ENCODE measurements at regions of chr19 and their contacts with region 1.

Region 1: DNA sequence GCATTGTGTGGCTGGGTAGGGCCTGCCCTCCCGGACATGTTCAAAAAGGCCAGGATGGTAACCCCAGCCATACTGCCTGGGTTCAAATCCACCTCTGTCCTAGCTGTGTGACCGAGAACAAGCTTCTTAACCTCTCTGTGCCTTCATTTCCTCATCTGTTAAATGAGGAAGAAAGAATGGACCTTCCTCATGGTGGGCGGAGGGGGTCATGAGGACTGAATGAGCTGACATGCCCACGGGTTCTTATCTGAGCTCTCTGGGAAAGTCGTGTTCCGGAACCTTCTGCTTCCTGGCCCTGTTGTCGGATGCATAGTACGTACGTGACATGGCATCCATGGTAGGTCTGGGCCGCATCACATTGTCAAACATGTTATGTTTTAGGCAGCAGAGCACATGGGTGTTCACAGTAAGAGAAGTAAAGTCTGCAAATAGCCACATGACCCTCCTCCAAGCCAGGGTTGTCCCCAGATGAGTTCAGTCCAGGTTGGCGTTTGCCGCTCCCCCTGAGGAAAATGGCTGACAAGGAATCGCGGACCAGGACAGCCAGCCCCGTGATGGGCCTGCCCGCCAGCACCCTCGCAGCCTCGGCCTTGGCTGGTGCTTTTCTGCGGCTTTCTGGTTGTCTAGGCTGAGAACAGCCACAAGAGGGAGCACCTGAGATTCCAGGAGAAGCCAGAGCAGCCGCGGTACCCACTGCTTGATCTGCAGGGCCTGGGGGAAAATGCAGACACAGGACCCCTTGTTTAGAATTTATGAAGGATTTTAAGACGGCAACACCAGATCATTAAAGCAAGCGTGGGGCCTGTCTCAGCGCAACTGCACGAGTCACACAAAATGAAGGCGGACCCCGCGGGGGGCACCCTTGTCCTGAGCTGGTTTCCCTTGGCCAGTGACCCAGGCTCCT is 2.4 kb upstream of the NTN5 start:
- DNase-seq: peak; percentile 92
- CTCF ChIP-seq: peak; percentile 87

Region 2: DNA sequence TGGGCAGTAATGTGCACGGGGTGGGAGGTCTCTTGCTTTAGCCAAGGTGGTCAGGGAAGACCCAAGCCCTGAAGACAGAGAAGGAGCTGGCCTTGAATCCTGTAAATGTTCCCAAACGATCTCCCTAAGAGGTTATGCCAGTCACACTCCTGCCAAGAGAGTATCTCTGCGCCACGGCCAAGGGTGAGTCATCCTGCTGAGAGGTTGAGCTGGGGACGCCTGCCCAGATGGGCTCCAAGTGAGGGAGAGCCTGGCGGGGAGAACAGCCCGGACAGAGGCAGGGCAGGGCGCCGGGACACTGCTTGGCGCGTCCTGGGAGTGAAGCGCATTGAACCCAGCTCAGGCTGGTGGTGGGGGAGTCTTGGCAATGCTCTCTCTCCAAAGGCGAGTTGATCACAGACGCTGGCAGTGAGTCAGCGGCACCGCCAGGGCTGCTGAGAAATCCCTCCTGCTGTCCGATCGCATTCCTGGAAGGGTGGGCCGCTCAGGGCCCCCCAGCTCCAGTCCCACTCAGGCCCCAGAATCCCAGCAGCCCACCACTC is 106.8 kb before region 1 on chr19:
- CTCF ChIA-PET with region 1: no interaction called
- POLR2A ChIA-PET with region 1: no interaction called
- DNase-seq: no peak
- CTCF ChIP-seq: no peak

Region 3: GRCh38 chr19:48624067-48624594 is 51.0 kb before region 1 on chr19:
- CTCF ChIA-PET with region 1: no interaction called
- POLR2A ChIA-PET with region 1: no interaction called
- DNase-seq: peak; percentile 96
- CTCF ChIP-seq: no peak

Region 4: GRCh38 chr19:48646001-48646721 is 29.0 kb before region 1 on chr19 and contains the start of gene CA11:
- CTCF ChIA-PET with region 1: interaction called, 23 read pairs
- POLR2A ChIA-PET with region 1: no interaction called
- DNase-seq: peak; percentile 93
- CTCF ChIP-seq: peak; percentile 98

Region 5: DNA sequence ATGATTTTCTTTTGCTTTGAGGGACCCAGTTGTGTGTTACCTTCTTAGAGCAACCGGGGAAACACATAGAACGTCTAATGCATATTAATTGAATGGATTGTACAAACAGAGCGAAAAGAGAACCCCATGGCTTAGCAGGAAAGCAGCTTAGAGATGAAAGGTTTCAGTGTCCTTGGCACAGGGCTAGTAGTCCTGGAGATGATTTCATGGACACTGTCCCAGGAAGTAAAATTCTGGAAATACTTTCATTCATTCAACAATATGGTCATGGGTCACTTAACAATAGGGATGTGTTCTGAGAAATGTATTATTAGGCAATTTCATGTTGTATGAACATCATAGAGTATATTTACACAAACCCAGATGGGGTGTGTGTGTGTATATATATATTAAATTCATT is 10.9 kb after region 1 on chr19:
- CTCF ChIA-PET with region 1: interaction called, 19 read pairs
- POLR2A ChIA-PET with region 1: no interaction called
- DNase-seq: no peak
- CTCF ChIP-seq: no peak

Region 6: GRCh38 chr19:48713864-48714758 is 38.9 kb after region 1 on chr19:
- CTCF ChIA-PET with region 1: interaction called, 22 read pairs
- POLR2A ChIA-PET with region 1: interaction called, 3 read pairs
- DNase-seq: peak; percentile 99
- CTCF ChIP-seq: no peak

Region 7: DNA sequence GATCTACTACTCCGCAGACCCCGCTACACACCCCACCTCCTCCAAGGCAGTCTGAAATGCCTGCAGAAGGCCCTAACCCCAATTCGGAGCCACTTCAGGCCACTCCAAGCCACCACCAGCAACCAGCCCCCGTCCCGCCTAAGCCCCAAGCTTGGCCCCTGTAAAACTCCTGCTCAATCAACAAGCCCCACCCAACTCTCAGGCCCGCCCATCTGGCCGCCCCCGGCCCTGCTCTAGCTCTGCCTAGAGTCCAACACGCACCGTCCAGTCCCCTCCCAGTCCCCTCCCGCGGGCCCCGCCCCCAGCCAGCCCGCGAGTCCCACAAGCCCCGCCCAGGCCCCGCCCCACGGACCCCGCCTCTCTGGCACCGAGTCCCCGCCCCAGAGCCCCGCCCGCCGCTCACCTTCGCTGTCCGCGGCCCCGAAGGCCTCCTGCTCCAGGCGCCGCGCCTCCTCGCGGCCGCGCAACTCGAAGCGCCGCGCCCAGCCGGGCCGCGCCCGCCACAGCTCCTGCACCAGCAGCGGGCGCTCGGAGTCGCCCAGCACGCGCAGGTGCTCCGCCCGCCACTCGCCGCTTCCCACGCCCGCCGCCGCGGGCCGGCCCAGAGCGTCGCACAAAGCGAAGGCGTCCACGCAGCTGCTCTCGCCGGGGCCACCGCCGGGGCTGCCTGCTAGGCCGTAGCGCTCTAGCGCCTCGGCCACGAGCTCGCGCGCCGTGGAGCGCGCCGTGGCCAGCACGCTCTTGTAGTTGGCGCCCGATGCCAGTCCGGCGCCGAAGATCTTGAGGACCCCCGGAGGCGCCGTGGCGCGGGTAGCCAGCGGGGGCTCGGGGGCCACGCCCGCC is 63.6 kb after region 1 on chr19:
- CTCF ChIA-PET with region 1: interaction called, 16 read pairs
- POLR2A ChIA-PET with region 1: no interaction called
- DNase-seq: peak; percentile 99
- CTCF ChIP-seq: peak; percentile 66

Region 8: DNA sequence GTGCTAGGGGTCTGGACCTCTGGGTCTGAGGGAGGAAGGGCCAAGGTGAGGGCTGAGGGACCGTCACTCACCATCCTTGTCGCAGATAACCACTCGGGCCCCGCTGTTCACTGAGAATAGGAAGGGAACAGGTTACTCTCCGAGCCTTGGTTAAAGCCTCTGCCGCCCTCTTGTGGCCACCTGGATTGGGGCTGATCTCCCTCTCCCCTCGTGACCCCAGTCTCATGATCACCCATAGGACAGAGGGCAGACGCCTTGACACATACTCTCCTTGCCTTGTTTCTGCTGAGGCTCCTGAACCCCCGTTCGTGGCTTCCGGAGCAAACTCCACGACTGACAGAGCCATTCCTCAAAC is 160.5 kb after region 1 on chr19:
- CTCF ChIA-PET with region 1: interaction called, 10 read pairs
- POLR2A ChIA-PET with region 1: no interaction called
- DNase-seq: peak; percentile 93
- CTCF ChIP-seq: peak; percentile 90